ENCODE measurements at regions of chr15 and their contacts with region 1.

Region 1: GRCh38 chr15:64865998-64866520 is 24.3 kb downstream of the PLEKHO2 start:
- DNase-seq: peak in 1 of 2 experiments; percentile 79
- H3K4me3 ChIP-seq: no peak overlapping the region
- H3K27ac ChIP-seq: peak overlapping the region; percentile 50; the same call in 1 of the 2 replicates
- H3K4me1 ChIP-seq: peaks cover 5 to 25% (median 15%) of the 10 kb centered on the region in 4 experiments
- H3K27me3 ChIP-seq: no peaks in the 10 kb centered on the region
- CTCF ChIP-seq: no peak
- EP300 ChIP-seq: 0 out of 3 replicates have a peak, but pooled peaks of 1 of the 2 experiments have one; percentile 9
- POLR2A ChIP-seq: no peak
- RAD21 ChIP-seq: peak in 1 of 2 experiments; percentile 16; a peak in 2 of 4 replicates

Region 2: GRCh38 chr15:64780600-64781156 is 85.4 kb before region 1 on chr15:
- CTCF ChIA-PET with region 1: no interaction called
- POLR2A ChIA-PET with region 1: no interaction called
- DNase-seq: no peak
- H3K4me3 ChIP-seq: no peak overlapping the region
- H3K27ac ChIP-seq: no peak overlapping the region
- H3K4me1 ChIP-seq: peaks cover 7 to 22% (median 16%) of the 10 kb centered on the region in 4 experiments
- H3K27me3 ChIP-seq: no peaks in the 10 kb centered on the region
- CTCF ChIP-seq: no peak
- EP300 ChIP-seq: no peak
- POLR2A ChIP-seq: no peak
- RAD21 ChIP-seq: no peak

Region 3: GRCh38 chr15:64851503-64851840 is 14.6 kb before region 1 on chr15:
- CTCF ChIA-PET with region 1: interaction called, 10 read pairs
- POLR2A ChIA-PET with region 1: interaction called, 6 read pairs
- DNase-seq: no peak
- H3K4me3 ChIP-seq: no peak overlapping the region
- H3K27ac ChIP-seq: no peak overlapping the region
- H3K4me1 ChIP-seq: peaks cover 11 to 23% (median 15%) of the 10 kb centered on the region in 4 experiments
- H3K27me3 ChIP-seq: no peaks in the 10 kb centered on the region
- CTCF ChIP-seq: no peak
- EP300 ChIP-seq: no peak
- POLR2A ChIP-seq: no peak
- RAD21 ChIP-seq: no peak

Region 4: DNA sequence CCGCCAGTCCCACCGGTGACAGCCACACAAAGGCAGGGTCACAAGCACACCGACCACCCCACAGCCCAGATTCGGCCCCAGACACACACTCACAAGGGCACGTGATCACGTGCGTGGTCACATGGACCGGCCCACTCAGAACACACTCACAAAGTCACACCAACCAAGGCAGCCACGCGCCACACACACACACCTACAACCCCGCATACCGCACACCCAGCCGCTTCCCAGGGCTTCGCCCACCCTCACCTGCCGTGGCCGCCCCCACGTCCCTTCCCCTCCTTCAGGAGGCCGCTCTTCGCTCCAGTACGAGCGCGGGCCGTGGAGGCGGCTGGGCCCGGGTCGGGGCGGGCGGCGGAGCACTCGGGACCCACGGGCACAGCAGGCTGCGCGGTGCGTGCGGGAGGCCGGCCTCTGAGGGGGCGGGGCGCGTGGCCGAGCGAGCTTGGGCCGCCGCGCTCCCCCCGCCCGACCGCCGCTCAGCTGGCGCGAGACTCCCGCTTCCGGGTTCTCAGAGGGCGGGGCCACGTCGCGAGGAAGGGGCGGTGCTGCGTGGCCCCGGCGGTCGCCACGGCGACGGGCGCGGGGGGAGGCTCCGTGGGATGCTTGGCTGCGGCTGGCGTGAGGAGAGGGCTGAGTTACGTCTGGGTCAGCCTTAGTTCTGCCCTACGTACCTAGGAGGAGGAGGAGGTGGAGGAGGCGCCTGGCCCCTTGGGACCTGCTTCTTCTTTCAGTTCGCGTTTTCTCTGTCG is 123.5 kb after region 1 on chr15 and contains the start of gene SPG21:
- CTCF ChIA-PET with region 1: no interaction called
- POLR2A ChIA-PET with region 1: no interaction called
- DNase-seq: peak; percentile 41 to 89
- H3K4me3 ChIP-seq: peak within 1 kb of the TSS; percentile 81 to 98 (median 88)
- H3K27ac ChIP-seq: peak within 1 kb of the TSS; percentile 61; the same call in 1 of the 2 replicates
- H3K4me1 ChIP-seq: peaks cover 0 to 5% (median 1%) of the 10 kb centered on the region in 4 experiments; a peak in 4 of 7 replicates
- H3K27me3 ChIP-seq: no peaks in the 10 kb centered on the region; a peak in 1 of 7 replicates
- CTCF ChIP-seq: no peak
- EP300 ChIP-seq: 0 out of 3 replicates have a peak, but pooled peaks of 1 of the 2 experiments have one; percentile 68
- POLR2A ChIP-seq: 0 out of 3 replicates have a peak, but pooled peaks of 1 of the 2 experiments have one; percentile 48
- RAD21 ChIP-seq: no peak
- total RNA-seq, gene SPG21: 68.6 and 72.7 TPM in 2 replicates